ENCODE measurements at regions of chr20 and their contacts with region 1.

Region 1: GRCh38 chr20:7113577-7114466 is 346.3 kb downstream of the BMP2 start:
- DNase-seq: peak; percentile 34 to 64
- H3K4me3 ChIP-seq: no peak overlapping the region
- H3K27ac ChIP-seq: no peak overlapping the region
- H3K4me1 ChIP-seq: peaks cover 0 to 4% (median 1%) of the 10 kb centered on the region in 4 experiments; a peak in 3 of 7 replicates
- H3K27me3 ChIP-seq: no peaks in the 10 kb centered on the region
- CTCF ChIP-seq: peak; percentile 57 to 83 (median 74)
- EP300 ChIP-seq: no peak
- POLR2A ChIP-seq: no peak
- RAD21 ChIP-seq: peak; percentile 76 to 77

Region 2: GRCh38 chr20:7022597-7022996 is 91.2 kb before region 1 on chr20:
- CTCF ChIA-PET with region 1: no interaction called
- POLR2A ChIA-PET with region 1: no interaction called
- DNase-seq: no peak
- H3K4me3 ChIP-seq: no peak overlapping the region
- H3K27ac ChIP-seq: no peak overlapping the region
- H3K4me1 ChIP-seq: no peaks in the 10 kb centered on the region
- H3K27me3 ChIP-seq: no peaks in the 10 kb centered on the region
- CTCF ChIP-seq: no peak
- EP300 ChIP-seq: no peak
- POLR2A ChIP-seq: no peak
- RAD21 ChIP-seq: no peak

Region 3: GRCh38 chr20:7094438-7094997 is 19.3 kb before region 1 on chr20:
- CTCF ChIA-PET with region 1: interaction called, 28 read pairs
- POLR2A ChIA-PET with region 1: no interaction called
- DNase-seq: peak in 1 of 2 experiments; percentile 63
- H3K4me3 ChIP-seq: no peak overlapping the region
- H3K27ac ChIP-seq: no peak overlapping the region
- H3K4me1 ChIP-seq: no peaks in the 10 kb centered on the region
- H3K27me3 ChIP-seq: no peaks in the 10 kb centered on the region
- CTCF ChIP-seq: peak; percentile 76 to 81 (median 80)
- EP300 ChIP-seq: no peak
- POLR2A ChIP-seq: no peak
- RAD21 ChIP-seq: peak; percentile 87

Region 4: DNA sequence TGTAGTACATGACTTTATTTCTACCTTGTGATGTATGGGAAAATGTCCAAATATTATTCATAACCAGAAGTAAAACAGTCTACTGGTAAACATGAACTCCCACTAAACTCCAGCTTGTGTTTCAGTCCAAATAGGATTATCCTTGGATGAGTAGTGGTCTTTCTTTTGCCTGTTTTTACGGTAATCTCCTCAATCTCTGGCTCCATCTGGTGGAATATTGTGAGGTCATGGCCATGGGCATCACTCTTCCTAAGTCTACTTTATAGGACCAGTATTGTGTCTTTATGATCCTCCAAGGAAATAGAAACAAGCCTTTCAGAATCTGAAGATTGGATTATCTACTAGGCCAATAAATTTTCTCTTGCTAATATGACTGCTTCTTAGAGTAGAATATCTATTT is 158.7 kb after region 1 on chr20:
- CTCF ChIA-PET with region 1: interaction called, 12 read pairs
- POLR2A ChIA-PET with region 1: no interaction called
- DNase-seq: no peak
- H3K4me3 ChIP-seq: no peak overlapping the region
- H3K27ac ChIP-seq: no peak overlapping the region
- H3K4me1 ChIP-seq: peaks cover 0 to 3% (median 0%) of the 10 kb centered on the region in 4 experiments; a peak in 1 of 7 replicates
- H3K27me3 ChIP-seq: no peaks in the 10 kb centered on the region
- CTCF ChIP-seq: peak in 2 of 3 experiments; percentile 53 to 59; a peak in 2 of 4 replicates
- EP300 ChIP-seq: no peak
- POLR2A ChIP-seq: no peak
- RAD21 ChIP-seq: peak; percentile 84 to 85

Region 5: GRCh38 chr20:7285918-7286556 is 172.2 kb after region 1 on chr20:
- CTCF ChIA-PET with region 1: interaction called, 18 read pairs
- POLR2A ChIA-PET with region 1: no interaction called
- DNase-seq: peak in 1 of 2 experiments; percentile 77
- H3K4me3 ChIP-seq: no peak overlapping the region
- H3K27ac ChIP-seq: no peak overlapping the region
- H3K4me1 ChIP-seq: no peaks in the 10 kb centered on the region
- H3K27me3 ChIP-seq: no peaks in the 10 kb centered on the region
- CTCF ChIP-seq: peak; percentile 48 to 83 (median 67)
- EP300 ChIP-seq: no peak
- POLR2A ChIP-seq: no peak
- RAD21 ChIP-seq: peak; percentile 73 to 79

Measured in H1 (cell line).